Activated CD8-positive, alpha-beta T cell treated with anti-CD3 and anti-CD28 coated beads for 36 hours (primary cell): ENCODE measurements at regions of chr3 and their contacts with region 1.

Region 1: DNA sequence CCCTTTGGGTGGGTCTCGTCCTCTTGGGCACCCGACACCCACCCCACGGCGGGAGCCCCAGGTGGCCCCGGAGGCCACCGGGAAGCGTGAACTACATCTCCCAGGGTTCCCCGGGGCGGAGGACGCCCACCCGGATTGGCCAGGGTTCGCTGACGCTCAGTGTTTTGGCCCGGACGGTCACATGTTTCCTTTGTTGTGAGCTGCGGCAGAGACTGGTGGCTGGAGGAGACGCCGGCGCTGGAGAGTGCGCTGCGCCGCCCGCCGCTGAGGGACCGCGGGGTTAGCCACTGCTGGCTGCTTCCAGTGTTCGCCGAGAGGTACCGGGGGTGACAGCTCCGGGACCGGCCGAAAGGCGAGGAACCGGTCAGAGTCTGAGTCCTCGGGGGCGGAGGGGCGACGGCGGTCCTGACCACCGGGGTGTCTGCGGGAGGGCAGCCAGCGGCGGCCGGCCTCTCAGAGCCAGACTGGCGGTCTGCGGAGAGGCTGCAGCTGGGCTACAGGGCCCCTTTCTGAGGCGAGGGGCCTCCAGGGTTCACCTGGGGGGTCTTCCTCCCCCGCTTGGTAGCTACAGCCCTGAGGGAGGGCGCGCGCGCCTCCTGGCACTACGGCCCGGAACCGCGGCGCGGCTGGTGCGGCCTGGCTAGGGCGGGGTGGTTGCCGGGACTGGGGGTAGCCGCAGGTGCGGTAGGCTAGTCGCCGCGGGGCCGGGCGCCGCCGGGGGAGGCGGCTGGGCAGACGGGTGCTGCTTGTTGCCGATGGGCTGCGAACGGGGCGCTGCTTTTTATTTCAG is at the start of gene KLHL24:
- DNase-seq: peak; percentile 95
- ATAC-seq: peak; percentile 78
- H3K4me3 Mint-ChIP-seq: peak within 1 kb of the TSS; percentile 87
- H3K27ac Mint-ChIP-seq: peak within 1 kb of the TSS; percentile 94
- H3K4me1 Mint-ChIP-seq: peaks cover 35% of the 10 kb centered on the region
- H3K27me3 Mint-ChIP-seq: no peaks in the 10 kb centered on the region
- CTCF ChIP-seq: no peak
- total RNA-seq, gene KLHL24: 10.5 to 10.8 TPM

Region 2: GRCh38 chr3:183468424-183468823 is 167.2 kb before region 1 on chr3:
- CTCF ChIA-PET with region 1: interaction called, 3 read pairs
- POLR2A ChIA-PET with region 1: no interaction called
- intact Hi-C with region 1: loop called (anchors 5 kb)
- DNase-seq: no peak
- ATAC-seq: peak; percentile 59
- H3K4me3 Mint-ChIP-seq: no peak overlapping the region
- H3K27ac Mint-ChIP-seq: peak overlapping the region; percentile 86
- H3K4me1 Mint-ChIP-seq: peaks cover 20% of the 10 kb centered on the region
- H3K27me3 Mint-ChIP-seq: peaks cover 1% of the 10 kb centered on the region
- CTCF ChIP-seq: no peak

Region 3: GRCh38 chr3:183697610-183698317 is 62.1 kb after region 1 on chr3 and contains the start of gene YEATS2:
- CTCF ChIA-PET with region 1: interaction called, 15 read pairs
- POLR2A ChIA-PET with region 1: interaction called, 42 read pairs
- intact Hi-C with region 1: no loop called
- DNase-seq: peak; percentile 89
- ATAC-seq: peak; percentile 85
- H3K4me3 Mint-ChIP-seq: peak within 1 kb of the TSS; percentile 93
- H3K27ac Mint-ChIP-seq: peak within 1 kb of the TSS; percentile 92
- H3K4me1 Mint-ChIP-seq: peaks cover 31% of the 10 kb centered on the region
- H3K27me3 Mint-ChIP-seq: no peaks in the 10 kb centered on the region
- CTCF ChIP-seq: no peak
- total RNA-seq, gene YEATS2: 65.0 to 67.7 TPM

Region 4: DNA sequence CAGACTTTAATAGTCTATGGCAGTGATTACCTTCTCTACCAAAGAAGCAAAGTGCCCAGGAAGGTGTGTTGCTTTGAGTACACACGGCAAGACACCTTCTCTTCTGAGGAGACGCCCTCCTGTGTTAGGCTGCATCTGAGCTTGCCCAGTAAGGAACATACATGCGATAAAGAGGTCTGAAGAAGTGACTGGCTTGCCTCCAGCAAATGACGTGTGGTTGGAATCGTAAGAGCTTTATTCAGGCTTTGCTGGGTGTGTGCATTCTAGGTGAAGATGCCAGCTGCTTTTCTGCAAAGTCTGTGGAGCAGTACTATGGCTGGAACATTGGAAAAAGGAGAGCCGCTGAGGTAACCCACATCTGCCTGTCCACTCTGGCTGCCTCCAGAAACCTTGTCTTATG is 167.4 kb after region 1 on chr3:
- CTCF ChIA-PET with region 1: no interaction called
- POLR2A ChIA-PET with region 1: no interaction called
- intact Hi-C with region 1: no loop called
- DNase-seq: no peak
- ATAC-seq: no peak
- H3K4me3 Mint-ChIP-seq: no peak overlapping the region
- H3K27ac Mint-ChIP-seq: no peak overlapping the region
- H3K4me1 Mint-ChIP-seq: no peaks in the 10 kb centered on the region
- H3K27me3 Mint-ChIP-seq: no peaks in the 10 kb centered on the region
- CTCF ChIP-seq: no peak